Astrocyte of the cerebellum (primary cell): ENCODE measurements at regions of chr20 and their contacts with region 1.

Region 1: DNA sequence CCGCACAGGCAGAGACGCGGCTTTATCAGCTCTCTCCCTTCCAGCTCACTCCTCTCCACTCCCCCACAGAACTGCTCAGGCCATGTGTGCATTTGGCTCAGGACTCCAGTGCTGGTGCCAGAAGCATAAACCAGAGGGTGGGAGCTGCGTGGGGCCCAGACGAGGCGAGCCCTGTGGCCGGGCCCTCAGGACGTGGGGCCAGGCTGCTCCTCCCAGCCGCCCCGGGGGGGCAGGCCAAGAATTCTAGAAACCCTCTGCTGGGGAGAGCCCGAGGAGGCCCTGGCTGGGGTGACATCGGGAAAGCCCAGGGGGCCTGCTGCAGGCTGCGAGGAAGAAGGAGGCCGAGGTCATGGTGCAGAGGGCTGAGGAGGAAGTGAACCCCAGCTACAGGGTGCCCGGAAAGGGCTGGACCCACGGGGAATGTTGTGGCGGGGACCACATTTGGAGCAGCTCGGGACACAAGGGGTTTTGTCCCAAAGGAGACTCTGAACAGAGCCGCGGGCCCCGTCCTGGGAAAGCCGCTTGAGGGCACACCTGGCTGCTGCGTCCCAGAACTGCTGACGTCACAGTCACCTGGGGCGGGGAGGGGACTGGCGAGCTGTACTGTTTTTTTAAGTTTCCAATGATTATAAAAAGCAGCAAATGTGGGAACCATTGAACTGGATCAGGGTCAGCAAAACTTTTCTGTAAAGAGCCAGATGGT is 107.1 kb downstream of the BANF2 start:
- DNase-seq: peak; percentile 54
- H3K4me3 ChIP-seq: no peak overlapping the region
- CTCF ChIP-seq: no peak

Region 2: DNA sequence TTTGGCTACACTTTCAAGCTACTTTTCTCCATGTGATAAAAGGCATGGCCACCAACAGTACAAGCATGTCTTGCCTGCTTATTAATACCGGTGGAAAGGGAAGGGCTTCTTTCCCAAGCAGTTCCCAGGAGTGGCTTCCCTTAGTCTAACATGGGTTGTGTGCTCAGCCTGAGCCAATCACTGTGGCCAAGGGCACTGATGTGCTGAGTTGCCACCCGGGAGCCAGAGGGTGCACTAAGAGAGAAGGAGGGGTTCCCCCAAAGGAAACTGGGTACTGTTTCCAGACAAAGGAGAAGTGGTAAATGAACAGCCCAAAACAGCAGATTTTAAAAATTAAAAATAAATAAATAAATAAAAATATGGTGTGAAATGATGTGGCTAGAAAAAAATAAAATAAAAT is 38.6 kb before region 1 on chr20:
- in situ Hi-C with region 1: loop called (anchors 5 kb)
- DNase-seq: no peak
- H3K4me3 ChIP-seq: no peak overlapping the region
- CTCF ChIP-seq: no peak

Region 3: GRCh38 chr20:17938871-17939619 is 132.2 kb after region 1 on chr20:
- in situ Hi-C with region 1: no loop called
- DNase-seq: peak; percentile 57
- H3K4me3 ChIP-seq: no peak overlapping the region
- CTCF ChIP-seq: peak; percentile 97